Activated CD4-positive, alpha-beta T cell treated with anti-CD3 and anti-CD28 coated beads, Interleukin-2, amount 10 ng/mL, durations not matched to agents 24 days and 14 days (primary cell): ENCODE measurements at regions of chr1 and their contacts with region 1.

Region 1: GRCh38 chr1:111222308-111223125 is 5.0 kb upstream of the CHI3L2 start:
- DNase-seq: peak; percentile 94
- H3K4me3 Mint-ChIP-seq: peak overlapping the region; percentile 71
- H3K27ac Mint-ChIP-seq: peak overlapping the region; percentile 92
- H3K4me1 Mint-ChIP-seq: peaks cover 83% of the 10 kb centered on the region
- H3K27me3 Mint-ChIP-seq: no peaks in the 10 kb centered on the region

Region 2: GRCh38 chr1:110645821-110646735 is 576.4 kb before region 1 on chr1:
- intact Hi-C with region 1: loop called (anchors 5 kb)
- DNase-seq: peak; percentile 58
- H3K4me3 Mint-ChIP-seq: peak overlapping the region; percentile 36
- H3K27ac Mint-ChIP-seq: peak overlapping the region; percentile 71
- H3K4me1 Mint-ChIP-seq: peaks cover 45% of the 10 kb centered on the region
- H3K27me3 Mint-ChIP-seq: no peaks in the 10 kb centered on the region

Region 3: GRCh38 chr1:110963691-110964399 is 258.7 kb before region 1 on chr1 and contains the start of gene LRIF1:
- intact Hi-C with region 1: loop called (anchors 5 kb)
- DNase-seq: peak; percentile 100
- H3K4me3 Mint-ChIP-seq: peak within 1 kb of the TSS; percentile 89
- H3K27ac Mint-ChIP-seq: peak within 1 kb of the TSS; percentile 97
- H3K4me1 Mint-ChIP-seq: peaks cover 28% of the 10 kb centered on the region
- H3K27me3 Mint-ChIP-seq: peaks cover 10% of the 10 kb centered on the region
- total RNA-seq, gene LRIF1: 14.0 and 14.4 TPM in 2 replicates

Region 4: GRCh38 chr1:111203681-111204200 is 18.8 kb before region 1 on chr1:
- intact Hi-C with region 1: loop called (anchors 1 kb)
- DNase-seq: peak; percentile 96
- H3K4me3 Mint-ChIP-seq: peak overlapping the region; percentile 98
- H3K27ac Mint-ChIP-seq: peak overlapping the region; percentile 82
- H3K4me1 Mint-ChIP-seq: peaks cover 55% of the 10 kb centered on the region
- H3K27me3 Mint-ChIP-seq: no peaks in the 10 kb centered on the region

Region 5: DNA sequence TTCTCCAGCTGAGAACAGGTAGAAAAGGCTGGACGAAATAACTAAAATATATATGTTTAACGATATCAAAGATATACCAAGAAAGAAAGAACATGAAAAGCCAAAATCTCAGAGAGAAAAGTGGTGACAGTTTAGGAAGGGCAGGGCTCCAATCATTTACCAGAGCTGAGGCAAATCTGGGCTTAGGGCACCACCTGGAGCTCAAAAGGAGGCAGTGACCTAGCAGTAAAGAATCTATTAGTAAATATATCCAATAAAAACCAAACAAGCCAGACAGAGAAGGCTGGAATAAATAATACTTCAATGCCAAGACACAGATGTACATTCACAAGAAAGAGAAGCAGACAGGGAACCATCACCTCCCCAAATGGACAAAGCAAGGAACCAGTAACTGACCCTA is 111.7 kb after region 1 on chr1:
- intact Hi-C with region 1: loop called (anchors 1 kb)
- DNase-seq: peak; percentile 83
- H3K4me3 Mint-ChIP-seq: no peak overlapping the region
- H3K27ac Mint-ChIP-seq: no peak overlapping the region
- H3K4me1 Mint-ChIP-seq: no peaks in the 10 kb centered on the region
- H3K27me3 Mint-ChIP-seq: peaks cover 4% of the 10 kb centered on the region

Region 6: DNA sequence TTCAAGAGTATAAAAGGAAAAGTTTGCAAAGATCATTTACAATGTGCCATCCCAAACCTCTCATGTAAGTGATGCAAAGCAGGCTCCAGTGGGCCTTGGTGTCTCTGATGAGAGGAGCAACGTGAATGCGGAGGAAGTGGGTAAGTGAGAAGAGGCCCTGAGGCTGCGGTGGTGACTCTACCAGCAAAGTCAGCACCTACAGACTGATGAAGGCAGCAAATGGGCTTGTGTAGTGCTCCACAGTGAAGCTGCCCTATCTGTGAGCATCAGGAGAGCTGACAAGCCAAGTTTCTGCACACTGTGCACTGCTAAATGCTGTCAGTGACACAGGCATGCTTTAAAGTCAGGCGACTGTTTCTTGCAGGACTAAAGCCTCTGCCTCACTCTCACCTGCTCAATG is 381.5 kb after region 1 on chr1:
- intact Hi-C with region 1: loop called (anchors 5 kb)
- DNase-seq: peak; percentile 94
- H3K4me3 Mint-ChIP-seq: peak overlapping the region; percentile 87
- H3K27ac Mint-ChIP-seq: peak overlapping the region; percentile 98
- H3K4me1 Mint-ChIP-seq: peaks cover 66% of the 10 kb centered on the region
- H3K27me3 Mint-ChIP-seq: no peaks in the 10 kb centered on the region

Region 7: DNA sequence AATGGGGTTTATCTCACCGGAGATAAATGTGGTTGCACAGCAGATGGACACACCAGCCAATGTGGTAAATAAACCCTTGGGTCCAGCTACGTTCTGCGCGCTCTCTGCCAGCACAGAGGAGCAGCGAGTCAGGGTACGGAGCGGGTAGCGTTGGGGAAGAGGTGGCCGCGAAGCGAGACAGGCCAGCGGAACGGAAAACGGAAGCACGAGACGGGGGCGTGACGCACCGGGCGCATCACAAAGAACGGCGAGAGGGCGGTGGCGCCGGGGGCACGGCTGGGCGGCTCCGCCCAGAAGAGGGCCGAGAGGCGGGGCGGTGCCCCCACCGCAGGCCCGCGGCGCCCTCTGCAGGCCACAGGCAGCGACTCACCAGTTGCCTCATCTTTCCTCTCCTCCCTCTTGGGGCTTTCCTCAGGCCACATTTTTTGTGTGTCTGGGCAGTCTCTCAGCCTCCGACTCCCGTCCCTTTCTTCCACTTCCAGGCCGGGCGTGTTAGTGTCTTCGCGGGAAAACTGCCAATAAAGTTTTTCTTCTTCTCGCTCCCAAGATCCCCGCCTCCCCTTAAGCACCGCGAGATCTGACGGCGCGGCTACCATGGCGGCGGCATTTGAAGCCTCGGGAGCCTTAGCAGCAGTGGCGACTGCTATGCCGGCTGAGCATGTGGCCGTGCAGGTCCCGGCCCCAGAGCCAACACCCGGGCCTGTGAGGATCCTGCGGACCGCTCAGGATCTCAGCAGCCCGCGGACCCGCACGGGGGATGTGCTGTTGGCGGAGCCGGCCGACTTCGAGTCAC is 533.0 kb after region 1 on chr1 and contains the start of gene DDX20:
- intact Hi-C with region 1: loop called (anchors 5 kb)
- DNase-seq: peak; percentile 98
- H3K4me3 Mint-ChIP-seq: peak within 1 kb of the TSS; percentile 88
- H3K27ac Mint-ChIP-seq: peak within 1 kb of the TSS; percentile 92
- H3K4me1 Mint-ChIP-seq: peaks cover 41% of the 10 kb centered on the region
- H3K27me3 Mint-ChIP-seq: peaks cover 8% of the 10 kb centered on the region
- total RNA-seq, gene DDX20: 18.7 and 24.2 TPM in 2 replicates